ENCODE measurements at regions of chr19 and their contacts with region 1.

Region 1: DNA sequence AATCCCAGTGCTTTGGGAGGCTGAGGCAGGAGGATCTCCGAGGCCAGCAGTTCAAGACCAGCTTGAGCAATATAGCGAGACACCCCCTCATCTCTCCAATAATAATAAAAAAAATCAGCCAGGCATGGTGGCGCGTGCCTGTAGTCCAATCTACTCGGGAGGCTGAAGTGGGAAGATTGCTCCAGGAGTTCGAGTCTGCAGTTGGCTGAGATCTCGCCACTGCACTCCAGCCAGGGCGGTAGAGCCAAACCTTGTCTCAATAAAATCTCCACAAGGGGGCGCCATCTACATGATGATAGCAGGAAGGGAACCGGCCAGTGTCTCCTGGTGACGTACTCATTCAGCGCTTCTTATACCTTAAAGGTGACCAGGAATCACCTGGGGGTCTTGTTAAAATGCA is 13.6 kb upstream of the C5AR1 start:
- DNase-seq: peak; percentile 62
- H3K4me3 Mint-ChIP-seq: no peak overlapping the region
- H3K27ac Mint-ChIP-seq: no peak overlapping the region
- H3K4me1 Mint-ChIP-seq: peaks cover 5% of the 10 kb centered on the region
- H3K27me3 Mint-ChIP-seq: no peaks in the 10 kb centered on the region

Region 2: GRCh38 chr19:47391510-47392223 is 95.6 kb after region 1 on chr19:
- intact Hi-C with region 1: loop called (anchors 1 kb)
- DNase-seq: peak; percentile 70
- H3K4me3 Mint-ChIP-seq: no peak overlapping the region
- H3K27ac Mint-ChIP-seq: no peak overlapping the region
- H3K4me1 Mint-ChIP-seq: no peaks in the 10 kb centered on the region
- H3K27me3 Mint-ChIP-seq: peaks cover 5% of the 10 kb centered on the region

Region 3: GRCh38 chr19:47428177-47428894 is 132.3 kb after region 1 on chr19:
- intact Hi-C with region 1: loop called (anchors 10 kb)
- DNase-seq: peak; percentile 85
- H3K4me3 Mint-ChIP-seq: no peak overlapping the region
- H3K27ac Mint-ChIP-seq: no peak overlapping the region
- H3K4me1 Mint-ChIP-seq: peaks cover 13% of the 10 kb centered on the region
- H3K27me3 Mint-ChIP-seq: peaks cover 24% of the 10 kb centered on the region

Region 4: GRCh38 chr19:47707135-47707925 is 411.3 kb after region 1 on chr19:
- intact Hi-C with region 1: loop called (anchors 10 kb)
- DNase-seq: peak; percentile 64
- H3K4me3 Mint-ChIP-seq: no peak overlapping the region
- H3K27ac Mint-ChIP-seq: no peak overlapping the region
- H3K4me1 Mint-ChIP-seq: no peaks in the 10 kb centered on the region
- H3K27me3 Mint-ChIP-seq: peaks cover 5% of the 10 kb centered on the region

Measured in activated T-helper 2 cell treated with anti-CD3 and anti-CD28 coated beads, Interferon-gamma antibody, Interleukin-2, Interleukin-4, amounts not matched to agents 10 μg/mL and 5 μg/mL and 100 μg/mL, durations not matched to agents 14 hours and 24 hours and 36 hours (primary cell).